ENCODE measurements at regions of chr20 and their contacts with region 1.

Region 1: DNA sequence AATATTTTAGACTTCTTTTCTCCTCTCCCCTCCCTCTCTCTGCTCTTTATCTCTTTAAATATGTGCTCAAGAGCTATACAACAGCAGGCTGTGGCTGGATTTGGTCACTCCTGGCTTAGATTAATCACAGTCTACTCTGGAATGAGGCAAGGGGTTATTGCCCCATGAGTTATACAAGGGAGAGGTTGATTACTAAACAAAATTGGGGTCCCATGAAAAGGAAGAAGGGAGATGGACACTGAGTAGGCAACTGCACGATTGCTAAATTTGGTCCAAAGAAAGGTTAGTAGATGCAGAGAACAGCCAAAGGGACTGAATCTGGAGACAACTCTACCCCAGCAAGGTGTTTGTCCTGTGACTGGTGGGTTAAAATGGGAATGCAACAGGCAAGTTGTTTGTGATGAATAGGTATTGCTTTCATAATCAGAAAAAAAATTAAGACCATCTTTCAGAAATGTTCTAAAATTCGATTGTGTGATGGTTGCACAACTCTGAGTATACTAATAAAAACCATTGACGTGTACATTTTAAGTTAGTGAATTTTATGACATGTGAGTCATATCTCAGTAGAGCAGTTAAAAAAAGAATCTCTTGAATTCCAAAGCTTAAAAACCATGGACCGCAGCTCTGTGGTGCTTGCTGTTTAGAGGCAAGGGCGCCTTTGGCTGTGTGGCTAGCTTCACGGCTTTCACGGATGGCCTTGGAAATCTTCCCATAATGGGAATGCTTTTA is 57.1 kb downstream of the KIZ start:
- DNase-seq: peak; percentile 82
- H3K4me3 Mint-ChIP-seq: peak overlapping the region; percentile 21
- H3K27ac Mint-ChIP-seq: peak overlapping the region; percentile 61
- H3K4me1 Mint-ChIP-seq: peaks cover 40% of the 10 kb centered on the region
- H3K27me3 Mint-ChIP-seq: no peaks in the 10 kb centered on the region
- CTCF ChIP-seq: no peak

Region 2: DNA sequence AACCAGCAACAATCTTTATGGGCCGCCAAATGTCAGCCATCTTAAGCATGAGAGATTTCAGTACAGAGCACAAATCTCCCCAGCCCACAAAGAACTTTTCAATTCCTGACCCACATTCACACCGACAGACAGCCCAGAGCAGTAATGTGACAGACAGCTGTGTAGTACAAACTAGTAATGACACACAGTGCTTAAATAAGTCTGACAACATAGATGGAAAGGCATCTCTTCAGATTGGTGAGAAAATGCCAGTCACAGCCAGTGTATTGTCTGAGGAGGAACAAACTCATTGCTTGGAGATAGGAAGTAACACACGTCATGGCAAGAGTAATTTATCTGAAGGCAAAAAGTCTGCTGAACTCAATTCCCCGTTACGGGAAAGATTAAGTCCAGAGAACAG is 21.1 kb before region 1 on chr20:
- CTCF ChIA-PET with region 1: interaction called, 3 read pairs
- POLR2A ChIA-PET with region 1: interaction called, 26 read pairs
- intact Hi-C with region 1: no loop called
- DNase-seq: no peak
- H3K4me3 Mint-ChIP-seq: no peak overlapping the region
- H3K27ac Mint-ChIP-seq: peak overlapping the region; percentile 44
- H3K4me1 Mint-ChIP-seq: peaks cover 13% of the 10 kb centered on the region
- H3K27me3 Mint-ChIP-seq: no peaks in the 10 kb centered on the region
- CTCF ChIP-seq: no peak

Region 3: GRCh38 chr20:21202284-21202683 is 19.3 kb after region 1 on chr20:
- CTCF ChIA-PET with region 1: interaction called, 11 read pairs
- POLR2A ChIA-PET with region 1: interaction called, 19 read pairs
- intact Hi-C with region 1: no loop called
- DNase-seq: peak; percentile 54
- H3K4me3 Mint-ChIP-seq: no peak overlapping the region
- H3K27ac Mint-ChIP-seq: no peak overlapping the region
- H3K4me1 Mint-ChIP-seq: no peaks in the 10 kb centered on the region
- H3K27me3 Mint-ChIP-seq: no peaks in the 10 kb centered on the region
- CTCF ChIP-seq: no peak

Measured in MCF 10A (cell line).